HEK293 (cell line): ENCODE measurements at regions of chr18 and their contacts with region 1.

Region 1: GRCh38 chr18:658001-658946 is 821 bp downstream of the TYMS start:
- H3K4me3 ChIP-seq: peak overlapping the region; percentile 59
- H3K27ac ChIP-seq: peak overlapping the region; percentile 99
- H3K4me1 ChIP-seq: no peaks in the 10 kb centered on the region
- CTCF ChIP-seq: no peak; the same call in 1 of the 2 replicates

Region 2: DNA sequence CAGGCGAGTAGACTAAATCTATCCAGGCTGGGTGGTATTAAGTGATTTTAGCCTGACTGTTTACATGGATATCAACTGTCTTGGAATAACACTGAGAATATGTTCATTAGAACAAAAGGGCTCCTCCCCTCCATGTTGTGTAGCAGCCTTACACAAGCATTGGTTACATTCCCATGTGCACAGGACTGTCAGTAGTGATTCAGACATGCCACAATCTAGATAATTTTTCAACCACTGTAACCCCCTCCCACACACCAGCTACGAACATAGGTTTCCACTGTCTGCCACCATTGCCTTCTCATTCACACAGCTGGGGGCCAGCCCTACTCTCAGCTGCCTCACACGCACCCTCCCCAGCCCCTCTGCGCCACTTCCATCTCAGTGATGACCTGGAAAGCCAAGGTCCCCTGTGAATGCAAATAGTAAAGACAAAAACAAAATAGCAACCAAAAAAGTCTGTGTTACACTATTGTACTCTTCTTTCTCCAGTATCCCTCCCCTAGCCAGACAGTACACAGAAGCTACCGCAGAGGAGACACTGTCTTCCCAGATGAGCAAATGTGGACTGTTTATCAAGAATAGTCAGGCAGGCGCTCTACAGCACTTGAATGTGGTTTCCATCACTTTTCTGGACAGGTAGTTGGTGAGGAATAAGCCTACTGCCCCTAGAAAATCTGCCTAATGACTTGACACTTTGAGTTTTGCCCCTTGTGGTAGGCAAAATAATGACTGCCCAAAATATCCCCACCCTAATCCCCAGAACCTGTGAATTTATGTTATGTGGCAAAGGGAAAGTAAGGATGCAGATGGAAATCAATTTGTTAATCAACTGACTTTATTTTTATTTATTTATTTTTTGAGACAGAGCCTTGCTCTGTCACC is 28.8 kb before region 1 on chr18:
- CTCF ChIA-PET with region 1: interaction called, 14 read pairs
- POLR2A ChIA-PET with region 1: interaction called, 17 read pairs
- H3K4me3 ChIP-seq: no peak overlapping the region
- H3K27ac ChIP-seq: no peak overlapping the region
- H3K4me1 ChIP-seq: no peaks in the 10 kb centered on the region
- CTCF ChIP-seq: no peak

Region 3: DNA sequence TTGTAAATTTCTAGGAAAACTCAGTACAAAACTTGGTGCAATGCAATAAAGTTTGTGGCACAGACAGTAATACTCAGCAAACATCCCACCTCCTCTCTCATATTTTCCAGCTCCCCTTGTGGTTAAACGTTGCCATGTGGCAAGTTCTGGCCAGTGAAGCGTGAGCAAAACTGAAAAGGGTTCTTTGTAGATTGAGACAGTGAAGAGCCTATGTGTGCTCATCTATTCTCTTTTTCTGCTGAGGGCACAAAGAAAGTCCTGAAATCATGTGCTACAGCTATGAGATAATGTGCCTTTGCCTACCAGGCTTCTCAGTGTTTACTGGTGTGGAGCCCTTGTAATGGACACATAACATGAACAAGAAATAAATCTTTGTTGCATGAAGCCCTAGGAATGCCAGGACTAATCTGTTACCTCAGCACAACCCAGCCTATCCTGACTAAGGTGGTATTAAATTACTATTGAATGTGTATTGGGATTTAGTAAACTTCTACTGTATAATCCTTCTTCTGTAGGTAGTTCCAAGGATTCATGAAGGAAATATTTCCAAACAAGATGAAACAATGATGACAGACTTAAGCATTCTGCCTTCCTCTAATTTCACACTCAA is 13.8 kb before region 1 on chr18:
- CTCF ChIA-PET with region 1: interaction called, 4 read pairs
- POLR2A ChIA-PET with region 1: interaction called, 28 read pairs
- H3K4me3 ChIP-seq: no peak overlapping the region
- H3K27ac ChIP-seq: no peak overlapping the region
- H3K4me1 ChIP-seq: no peaks in the 10 kb centered on the region
- CTCF ChIP-seq: no peak

Region 4: DNA sequence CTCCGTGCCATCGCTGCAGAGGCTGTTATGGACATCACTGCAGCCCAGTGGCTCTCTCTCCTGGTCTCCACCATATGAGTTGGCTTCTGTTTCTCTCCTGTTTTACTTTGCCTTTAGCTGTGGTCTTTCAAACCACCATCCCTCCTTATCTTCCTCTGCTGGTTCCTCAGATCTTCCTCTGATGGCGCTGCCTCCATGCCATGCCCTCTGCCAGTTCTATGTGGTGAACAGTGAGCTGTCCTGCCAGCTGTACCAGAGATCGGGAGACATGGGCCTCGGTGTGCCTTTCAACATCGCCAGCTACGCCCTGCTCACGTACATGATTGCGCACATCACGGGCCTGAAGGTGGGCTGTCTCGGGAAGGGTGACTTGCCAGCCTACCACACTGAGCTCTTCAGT is 12.2 kb after region 1 on chr18:
- CTCF ChIA-PET with region 1: interaction called, 3 read pairs
- POLR2A ChIA-PET with region 1: interaction called, 18 read pairs
- H3K4me3 ChIP-seq: no peak overlapping the region
- H3K27ac ChIP-seq: no peak overlapping the region
- H3K4me1 ChIP-seq: no peaks in the 10 kb centered on the region
- CTCF ChIP-seq: no peak

Region 5: GRCh38 chr18:950882-951539 is 292.7 kb after region 1 on chr18:
- CTCF ChIA-PET with region 1: no interaction called
- POLR2A ChIA-PET with region 1: no interaction called
- H3K4me3 ChIP-seq: no peak overlapping the region
- H3K27ac ChIP-seq: no peak overlapping the region
- H3K4me1 ChIP-seq: no peaks in the 10 kb centered on the region
- CTCF ChIP-seq: no peak